MCF 10A (cell line): ENCODE measurements at regions of chr3 and their contacts with region 1.

Region 1: GRCh38 chr3:136390574-136390973 is 140.4 kb downstream of the PCCB start:
- DNase-seq: no peak
- H3K4me3 Mint-ChIP-seq: no peak overlapping the region
- H3K27ac Mint-ChIP-seq: no peak overlapping the region
- H3K4me1 Mint-ChIP-seq: no peaks in the 10 kb centered on the region
- H3K27me3 Mint-ChIP-seq: no peaks in the 10 kb centered on the region
- CTCF ChIP-seq: no peak

Region 2: DNA sequence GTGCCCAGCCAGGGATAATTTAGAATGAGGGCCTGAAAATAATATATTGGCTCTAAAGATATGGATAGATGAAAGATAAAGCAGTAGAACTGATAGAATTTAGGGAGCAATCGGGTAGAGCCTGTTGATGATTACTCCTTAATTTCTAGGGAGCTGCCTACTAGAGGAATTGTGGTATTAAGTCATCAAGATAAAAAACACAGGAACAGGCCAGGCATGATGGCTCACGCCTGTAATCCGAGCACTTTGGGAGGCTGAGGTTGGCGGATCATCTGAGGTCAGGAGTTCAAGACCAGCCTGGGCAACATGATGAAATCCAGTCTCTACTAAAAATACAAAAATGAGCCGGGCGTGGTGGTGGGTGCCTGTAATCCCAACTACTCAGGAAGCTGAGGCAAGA is 10.0 kb before region 1 on chr3:
- CTCF ChIA-PET with region 1: interaction called, 24 read pairs
- POLR2A ChIA-PET with region 1: interaction called, 3 read pairs
- intact Hi-C with region 1: no loop called
- DNase-seq: no peak
- H3K4me3 Mint-ChIP-seq: no peak overlapping the region
- H3K27ac Mint-ChIP-seq: no peak overlapping the region
- H3K4me1 Mint-ChIP-seq: no peaks in the 10 kb centered on the region
- H3K27me3 Mint-ChIP-seq: no peaks in the 10 kb centered on the region
- CTCF ChIP-seq: no peak

Region 3: GRCh38 chr3:136404056-136404455 is 13.5 kb after region 1 on chr3:
- CTCF ChIA-PET with region 1: interaction called, 19 read pairs
- POLR2A ChIA-PET with region 1: no interaction called
- intact Hi-C with region 1: no loop called
- DNase-seq: no peak
- H3K4me3 Mint-ChIP-seq: no peak overlapping the region
- H3K27ac Mint-ChIP-seq: no peak overlapping the region
- H3K4me1 Mint-ChIP-seq: no peaks in the 10 kb centered on the region
- H3K27me3 Mint-ChIP-seq: no peaks in the 10 kb centered on the region
- CTCF ChIP-seq: no peak

Region 4: DNA sequence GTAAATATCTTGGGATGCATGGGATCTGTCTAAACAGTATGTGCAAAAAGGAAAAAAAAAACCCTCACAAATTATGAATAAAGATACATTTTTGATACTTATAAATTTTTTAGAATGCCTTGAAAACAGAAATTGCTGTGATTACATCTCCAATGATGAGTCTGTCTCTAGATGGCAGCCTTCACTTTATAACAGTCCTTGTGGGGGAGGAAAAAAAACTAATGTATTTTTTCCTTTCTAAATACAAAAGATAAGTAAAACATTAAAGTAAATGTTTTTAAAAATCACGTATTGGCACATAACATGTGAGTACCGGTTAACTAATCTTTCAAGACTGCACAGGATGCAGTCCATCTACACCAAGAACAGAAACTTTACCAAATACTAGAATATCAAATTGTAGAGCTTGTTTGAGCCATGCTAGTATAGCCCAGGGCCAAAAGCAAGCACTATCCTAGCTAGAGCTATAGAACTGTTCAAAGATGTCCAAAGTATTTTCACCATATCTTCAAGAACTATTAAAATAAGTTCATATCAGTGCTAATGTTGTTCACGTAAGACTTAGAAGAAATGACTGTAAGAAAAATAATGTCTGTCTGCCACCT is 155.2 kb after region 1 on chr3:
- CTCF ChIA-PET with region 1: interaction called, 3 read pairs
- POLR2A ChIA-PET with region 1: no interaction called
- intact Hi-C with region 1: loop called (anchors 2 kb)
- DNase-seq: peak; percentile 20
- H3K4me3 Mint-ChIP-seq: no peak overlapping the region
- H3K27ac Mint-ChIP-seq: no peak overlapping the region
- H3K4me1 Mint-ChIP-seq: peaks cover 29% of the 10 kb centered on the region
- H3K27me3 Mint-ChIP-seq: no peaks in the 10 kb centered on the region
- CTCF ChIP-seq: peak; percentile 28